ENCODE measurements at regions of chr17 and their contacts with region 1.

Region 1: GRCh38 chr17:60535463-60535862 is 9.4 kb upstream of the APPBP2 start:
- H3K4me3 ChIP-seq: no peak overlapping the region
- H3K27ac ChIP-seq: no peak overlapping the region
- H3K4me1 ChIP-seq: no peaks in the 10 kb centered on the region
- CTCF ChIP-seq: no peak

Region 2: DNA sequence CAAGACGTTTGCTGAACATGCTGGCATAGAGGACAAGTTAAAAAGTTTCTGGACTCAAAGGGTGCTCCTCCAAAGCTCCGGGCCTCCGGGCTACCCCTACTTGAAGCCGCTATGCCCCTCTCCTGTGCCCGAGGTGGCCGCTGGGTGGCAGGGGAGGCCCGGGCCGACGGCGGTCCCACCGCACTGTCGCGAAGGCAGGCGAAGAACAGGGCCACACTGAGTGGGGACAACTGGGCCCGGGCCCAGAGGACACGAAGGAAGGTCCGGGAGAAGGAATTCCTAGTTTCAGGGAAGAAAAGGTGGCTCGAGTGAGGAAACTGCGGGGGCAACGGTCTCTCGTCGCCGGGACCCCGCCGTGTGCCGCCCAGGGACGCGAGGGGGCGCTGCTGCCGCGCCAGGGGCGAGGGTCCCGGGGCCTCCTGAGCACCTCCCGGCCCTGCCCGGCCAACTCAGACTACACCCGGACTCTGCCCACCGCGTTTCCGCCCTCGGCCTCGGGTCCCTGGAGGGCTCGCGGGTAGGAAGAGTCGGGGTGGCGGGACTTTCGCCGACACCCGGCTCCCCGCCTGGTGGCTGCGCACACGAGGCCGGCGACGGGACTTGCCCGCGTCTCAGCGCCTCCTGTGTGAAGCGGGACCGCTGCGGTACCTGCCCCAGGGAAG is 114.1 kb before region 1 on chr17:
- CTCF ChIA-PET with region 1: no interaction called
- POLR2A ChIA-PET with region 1: no interaction called
- H3K4me3 ChIP-seq: peak overlapping the region; percentile 23
- H3K27ac ChIP-seq: peak overlapping the region; percentile 17; the same call in 1 of the 2 replicates
- H3K4me1 ChIP-seq: no peaks in the 10 kb centered on the region
- CTCF ChIP-seq: no peak

Region 3: DNA sequence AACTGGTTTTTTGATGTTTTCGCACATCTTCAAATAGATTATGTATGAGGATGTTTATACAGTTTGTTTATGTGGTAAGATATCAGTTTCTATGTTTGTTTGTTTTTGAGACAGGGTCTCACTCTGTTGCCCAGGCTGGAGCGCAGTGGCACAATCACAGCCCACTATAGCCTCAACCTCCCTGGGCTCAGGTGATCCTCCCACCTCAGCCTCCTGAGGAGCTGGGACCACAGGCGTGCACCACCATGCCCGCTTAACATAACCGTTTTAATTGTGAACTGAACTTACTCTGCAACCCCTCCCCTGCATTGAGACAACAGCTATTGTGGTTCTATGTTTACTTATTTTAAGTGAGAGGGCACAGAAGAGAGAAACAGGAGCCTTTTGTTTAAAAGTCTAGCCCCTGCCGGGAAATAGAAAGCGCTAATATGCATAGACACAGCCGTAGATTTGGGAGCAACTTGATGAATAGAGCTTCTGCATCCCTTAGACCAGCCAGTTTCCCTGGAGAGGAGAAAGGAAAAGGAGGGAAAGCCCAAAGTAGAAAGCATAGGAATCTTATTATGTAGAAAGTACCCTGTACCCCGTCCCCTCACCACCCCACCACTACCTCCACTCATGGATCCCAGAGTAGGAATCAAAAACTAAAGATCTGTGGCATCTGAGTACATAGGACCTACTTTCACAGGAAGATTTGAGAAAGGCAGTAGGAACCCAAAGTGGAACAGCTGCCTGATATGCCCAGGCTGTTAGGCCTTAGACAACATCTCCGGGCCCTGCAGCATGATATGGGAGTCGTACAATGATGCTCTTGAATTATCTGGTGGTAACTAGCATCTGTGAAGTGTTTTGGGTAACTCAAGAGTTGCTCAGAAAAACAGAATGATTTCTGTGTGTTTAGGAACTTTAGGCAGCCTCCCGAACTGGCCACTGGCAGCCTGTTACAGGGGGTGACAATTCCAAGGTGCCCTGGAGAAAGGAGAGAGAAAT is 10.3 kb after region 1 on chr17:
- CTCF ChIA-PET with region 1: interaction called, 10 read pairs
- POLR2A ChIA-PET with region 1: interaction called, 4 read pairs
- H3K4me3 ChIP-seq: no peak overlapping the region
- H3K27ac ChIP-seq: no peak overlapping the region
- H3K4me1 ChIP-seq: no peaks in the 10 kb centered on the region
- CTCF ChIP-seq: no peak